Sigmoid colon (tissue), 7 donors: ENCODE measurements at regions of chr1 and their contacts with region 1.

Region 1: DNA sequence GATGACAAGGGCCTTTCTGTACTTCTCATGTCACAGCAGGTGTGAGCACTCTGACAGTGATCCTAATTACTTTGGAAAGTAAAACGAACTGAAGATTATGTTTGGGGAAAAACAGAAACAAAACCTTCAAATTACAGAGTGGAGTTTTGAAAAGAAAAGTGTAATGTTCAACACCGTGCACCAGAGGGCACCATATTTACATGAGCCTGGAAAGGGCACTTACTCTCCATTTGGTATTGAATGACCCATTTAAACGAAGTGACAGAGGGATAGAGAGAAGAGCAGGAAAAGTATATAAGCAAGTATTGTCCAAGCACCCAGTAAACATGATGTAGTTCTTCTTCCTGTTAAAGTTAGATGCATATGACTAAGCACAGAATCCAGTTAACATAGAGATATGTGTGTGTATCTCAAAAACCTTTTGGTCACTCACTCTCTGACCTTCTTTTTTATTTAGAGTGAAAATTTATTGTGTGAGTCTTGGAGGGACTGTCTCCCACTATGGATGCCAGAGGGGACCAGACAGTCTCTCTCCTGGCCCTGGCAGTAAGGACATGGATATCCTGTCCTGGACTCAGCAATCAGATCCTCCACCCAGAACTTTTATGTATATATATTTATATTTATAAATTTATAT is 3.8 kb upstream of the RGSL1 start:
- DNase-seq: no peak
- H3K4me3 ChIP-seq: no peak overlapping the region
- H3K27ac ChIP-seq: no peak overlapping the region
- H3K4me1 ChIP-seq: peaks cover 0 to 6% (median 0%) of the 10 kb centered on the region in 4 donors
- H3K27me3 ChIP-seq: no peaks in the 10 kb centered on the region
- CTCF ChIP-seq: peak in 3 of 4 experiments; percentile 39 to 58 (median 58)
- EP300 ChIP-seq: no peak
- POLR2A ChIP-seq: no peak

Region 2: DNA sequence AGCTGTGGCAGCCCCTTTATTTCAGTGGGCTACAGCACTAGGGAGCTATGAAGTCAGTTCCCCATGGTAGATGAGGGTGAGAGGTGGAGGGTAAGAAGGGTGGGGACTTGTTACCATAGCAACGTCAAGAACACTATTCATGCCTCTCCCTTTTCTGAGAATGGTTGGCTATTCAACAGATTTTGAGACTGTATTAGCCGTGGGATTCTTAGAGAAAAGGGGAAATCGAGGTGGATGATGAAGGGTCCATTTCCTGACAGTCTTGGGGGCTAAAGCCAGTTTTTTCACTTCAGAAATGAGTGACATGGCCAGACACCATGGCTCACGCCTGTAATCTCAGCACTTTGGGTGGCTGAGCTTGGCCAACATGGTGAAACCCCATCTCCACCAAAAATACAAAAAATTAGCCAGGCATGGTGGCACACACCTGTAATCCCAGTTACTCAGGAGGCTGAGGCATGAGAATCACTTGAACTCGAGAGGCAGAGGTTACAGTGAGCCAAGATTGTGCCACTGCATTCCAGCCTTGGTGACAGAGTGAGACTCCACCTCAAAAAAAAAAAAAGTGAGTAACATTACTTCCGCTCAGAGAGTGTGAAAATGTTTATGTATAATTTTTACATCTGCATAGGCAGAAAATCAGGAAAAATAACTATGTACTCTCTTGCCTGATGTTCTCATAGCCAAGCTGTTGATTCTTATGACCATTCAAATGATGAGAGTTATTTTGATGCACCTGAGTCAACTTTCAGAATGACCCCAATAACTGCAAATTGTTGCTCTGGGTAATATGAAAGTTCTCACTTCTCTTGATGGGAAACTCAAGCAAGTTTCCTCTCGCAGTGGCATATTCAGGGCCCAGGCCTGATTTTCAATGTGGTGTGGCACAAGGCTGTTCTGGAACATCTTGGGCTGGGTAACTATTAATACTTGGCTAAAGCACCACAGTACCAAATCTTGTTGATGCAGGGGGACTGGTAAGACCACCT is 19.4 kb before region 1 on chr1:
- intact Hi-C with region 1: no loop called
- DNase-seq: no peak
- H3K4me3 ChIP-seq: no peak overlapping the region
- H3K27ac ChIP-seq: no peak overlapping the region
- H3K4me1 ChIP-seq: no peaks in the 10 kb centered on the region
- H3K27me3 ChIP-seq: no peaks in the 10 kb centered on the region
- CTCF ChIP-seq: no peak
- EP300 ChIP-seq: no peak
- POLR2A ChIP-seq: no peak

Region 3: GRCh38 chr1:182588500-182589452 is 142.6 kb after region 1 on chr1 and contains the start of gene RNASEL:
- intact Hi-C with region 1: loop called (anchors 10 kb)
- DNase-seq: peak; percentile 90
- H3K4me3 ChIP-seq: peak within 1 kb of the TSS; percentile 43 to 73 (median 68)
- H3K27ac ChIP-seq: peak within 1 kb of the TSS; percentile 87 to 92 (median 89)
- H3K4me1 ChIP-seq: peaks cover 0 to 25% (median 17%) of the 10 kb centered on the region in 4 donors
- H3K27me3 ChIP-seq: no peaks in the 10 kb centered on the region
- CTCF ChIP-seq: no peak
- EP300 ChIP-seq: no peak
- POLR2A ChIP-seq: peak in 1 of 2 donors; percentile 29
- total RNA-seq, gene RNASEL: 6.2 to 10.0 (median 7.5) TPM

Region 4: GRCh38 chr1:182662121-182662890 is 216.2 kb after region 1 on chr1:
- intact Hi-C with region 1: no loop called
- DNase-seq: no peak
- H3K4me3 ChIP-seq: no peak overlapping the region
- H3K27ac ChIP-seq: no peak overlapping the region
- H3K4me1 ChIP-seq: no peaks in the 10 kb centered on the region
- H3K27me3 ChIP-seq: no peaks in the 10 kb centered on the region
- CTCF ChIP-seq: no peak
- EP300 ChIP-seq: no peak
- POLR2A ChIP-seq: no peak

Region 5: DNA sequence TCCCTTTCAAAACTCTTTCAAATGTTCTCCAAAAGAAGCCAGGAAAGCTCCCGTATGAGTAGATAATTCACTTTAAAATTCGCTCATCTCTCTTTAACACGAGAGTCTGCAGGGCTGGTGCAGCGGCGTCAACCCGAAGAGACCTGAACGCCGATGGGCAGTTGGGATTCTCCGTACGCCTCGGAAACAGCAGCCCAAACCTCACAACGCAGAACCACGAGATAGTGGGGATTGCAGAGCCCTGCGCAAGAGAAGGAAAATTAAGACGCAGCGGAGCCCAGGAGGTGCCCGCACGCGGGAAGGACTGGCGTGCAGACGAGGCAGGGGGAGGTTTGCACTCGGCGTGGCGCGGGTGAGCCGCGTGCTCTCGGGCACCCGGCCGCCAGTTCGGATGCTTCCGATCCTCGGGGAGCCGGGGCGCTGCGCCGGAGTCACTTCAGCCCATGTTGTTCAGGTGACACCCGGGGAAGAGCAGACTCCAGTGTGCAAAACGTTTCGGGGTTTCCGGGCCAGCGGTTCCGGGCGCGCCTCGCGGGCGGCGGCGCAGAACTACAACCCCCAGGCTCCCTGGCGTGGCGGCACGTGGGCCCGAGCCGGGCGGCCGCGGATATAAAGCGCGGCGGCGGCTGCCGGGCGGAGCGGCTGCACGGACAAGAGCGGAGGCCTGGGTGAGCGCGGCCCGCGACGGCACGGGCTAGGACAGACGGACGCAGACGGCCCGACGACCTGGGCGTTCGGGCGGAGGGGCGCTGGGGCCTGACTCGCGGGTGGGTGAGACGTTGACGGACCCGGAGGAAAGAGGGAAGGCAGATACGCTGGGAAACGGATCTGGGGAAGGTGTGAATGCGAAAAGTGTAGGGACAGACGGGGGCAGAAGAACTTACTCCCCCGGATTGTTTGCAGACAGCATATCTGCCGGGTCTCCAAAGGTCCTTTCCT is 343.3 kb after region 1 on chr1 and contains the start of gene NPL:
- intact Hi-C with region 1: loop called (anchors 5 kb)
- DNase-seq: peak; percentile 90
- H3K4me3 ChIP-seq: peak within 1 kb of the TSS; percentile 56 to 70 (median 64)
- H3K27ac ChIP-seq: peak within 1 kb of the TSS; percentile 74 to 85 (median 82)
- H3K4me1 ChIP-seq: peaks cover 0 to 14% (median 7%) of the 10 kb centered on the region in 4 donors
- H3K27me3 ChIP-seq: no peaks in the 10 kb centered on the region
- CTCF ChIP-seq: no peak
- EP300 ChIP-seq: no peak
- POLR2A ChIP-seq: peak; percentile 16 to 25
- total RNA-seq, gene NPL: 7.2 to 13.0 (median 11.1) TPM